ENCODE measurements at regions of chr10 and their contacts with region 1.

Region 1: DNA sequence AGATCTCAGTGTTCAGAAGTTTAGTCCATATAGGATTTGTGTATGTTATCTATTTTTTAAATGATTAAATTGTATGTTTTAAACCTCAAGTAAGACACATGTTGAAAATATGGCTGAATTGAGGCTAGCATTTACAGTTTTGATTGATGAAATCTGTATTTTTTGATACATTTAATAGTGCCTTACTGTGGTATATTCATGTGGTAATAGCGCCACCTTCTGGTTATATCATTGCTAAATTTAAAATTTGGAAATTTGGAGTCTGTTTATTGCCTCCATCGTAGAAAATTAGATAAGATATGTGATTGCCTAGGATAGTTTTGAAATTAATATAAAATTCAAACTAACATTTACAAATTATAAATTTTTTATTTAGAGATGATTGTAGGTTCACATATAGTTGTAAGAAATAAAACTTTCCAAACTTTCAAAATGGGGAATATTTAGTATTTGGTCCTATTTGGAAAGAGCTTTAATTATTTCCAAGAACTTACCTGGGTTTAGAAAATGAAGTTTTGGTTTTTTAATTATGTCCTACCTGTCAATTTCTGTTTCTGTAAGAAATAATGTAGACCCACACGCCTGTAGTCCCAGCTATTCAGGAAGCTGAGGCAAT is 19.1 kb upstream of the ARMS2 start:
- DNase-seq: no peak
- ATAC-seq: peak; percentile 63

Region 2: GRCh38 chr10:122342293-122343134 is 92.8 kb before region 1 on chr10:
- intact Hi-C with region 1: loop called (anchors 5 kb)
- DNase-seq: no peak
- ATAC-seq: peak; percentile 52

Region 3: GRCh38 chr10:122557516-122557915 is 122.2 kb after region 1 on chr10:
- intact Hi-C with region 1: loop called (anchors 5 kb)
- DNase-seq: no peak
- ATAC-seq: no peak